Calu3 (cell line): ENCODE measurements at regions of chr14 and their contacts with region 1.

Region 1: DNA sequence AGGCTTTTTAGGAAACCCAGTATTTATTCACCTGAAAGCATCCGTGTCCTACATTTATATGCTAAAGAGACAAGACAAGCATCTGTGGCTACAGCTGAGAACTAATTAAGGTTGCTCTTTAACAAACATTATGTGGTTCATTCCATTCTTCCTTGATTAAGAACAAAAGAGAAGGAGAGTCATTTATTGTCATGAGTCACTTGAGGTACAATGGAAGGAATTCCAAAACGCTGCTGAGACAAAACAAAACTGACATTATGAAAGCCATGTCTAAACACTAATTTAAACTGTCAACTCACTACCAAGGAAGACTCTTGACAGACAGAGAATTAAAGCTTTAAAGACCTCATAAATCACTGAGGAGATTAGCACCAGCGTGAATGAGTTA is 214.4 kb downstream of the BMP4 start:
- DNase-seq: no peak
- H3K4me3 Mint-ChIP-seq: no peak overlapping the region
- H3K27ac Mint-ChIP-seq: no peak overlapping the region
- H3K4me1 Mint-ChIP-seq: no peaks in the 10 kb centered on the region
- H3K27me3 Mint-ChIP-seq: no peaks in the 10 kb centered on the region
- CTCF ChIP-seq: no peak

Region 2: GRCh38 chr14:52844262-52845060 is 897.8 kb before region 1 on chr14:
- CTCF ChIA-PET with region 1: interaction called, 10 read pairs
- intact Hi-C with region 1: no loop called
- DNase-seq: no peak
- H3K4me3 Mint-ChIP-seq: no peak overlapping the region
- H3K27ac Mint-ChIP-seq: no peak overlapping the region
- H3K4me1 Mint-ChIP-seq: no peaks in the 10 kb centered on the region
- H3K27me3 Mint-ChIP-seq: no peaks in the 10 kb centered on the region
- CTCF ChIP-seq: no peak

Region 3: GRCh38 chr14:53411125-53411524 is 331.1 kb before region 1 on chr14:
- CTCF ChIA-PET with region 1: no interaction called
- intact Hi-C with region 1: no loop called
- DNase-seq: no peak
- H3K4me3 Mint-ChIP-seq: no peak overlapping the region
- H3K27ac Mint-ChIP-seq: no peak overlapping the region
- H3K4me1 Mint-ChIP-seq: no peaks in the 10 kb centered on the region
- H3K27me3 Mint-ChIP-seq: no peaks in the 10 kb centered on the region
- CTCF ChIP-seq: no peak

Region 4: DNA sequence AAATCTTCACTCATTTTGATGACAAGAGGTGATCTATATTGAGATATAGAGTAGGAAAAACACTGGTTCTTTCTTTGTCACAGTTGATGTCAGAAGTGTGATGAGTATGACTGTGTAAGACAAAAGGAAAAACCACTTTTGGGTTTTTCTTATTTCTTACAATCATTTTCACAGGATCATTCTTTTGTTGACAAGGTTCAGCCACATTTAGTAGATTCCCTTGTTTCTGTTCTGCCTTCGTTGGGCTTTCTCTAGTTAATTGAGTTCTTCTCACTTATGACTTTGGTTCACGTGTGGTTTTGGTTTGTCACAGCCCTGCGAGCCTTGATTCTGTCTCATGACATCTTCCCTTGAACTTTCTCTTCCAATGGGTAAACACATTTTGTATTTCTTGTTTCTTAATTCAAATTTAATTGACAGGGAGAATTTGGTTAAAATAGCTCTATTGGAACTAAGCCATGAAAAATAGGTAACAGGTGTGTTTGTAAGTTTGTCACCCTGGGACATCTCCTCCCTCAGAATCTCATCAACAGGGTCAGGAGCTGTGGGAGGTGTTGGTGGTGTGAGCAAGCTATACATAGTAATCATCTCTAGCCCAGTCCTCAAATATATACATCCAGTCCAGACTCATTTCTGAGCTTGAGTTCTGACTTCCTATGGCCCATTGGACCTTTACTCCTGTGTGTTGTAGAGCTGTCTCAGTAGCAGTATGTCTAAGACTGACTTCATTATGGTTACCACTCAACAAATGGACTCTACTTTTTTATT is 40.9 kb before region 1 on chr14:
- CTCF ChIA-PET with region 1: interaction called, 10 read pairs
- intact Hi-C with region 1: no loop called
- DNase-seq: no peak
- H3K4me3 Mint-ChIP-seq: no peak overlapping the region
- H3K27ac Mint-ChIP-seq: no peak overlapping the region
- H3K4me1 Mint-ChIP-seq: peaks cover 9% of the 10 kb centered on the region
- H3K27me3 Mint-ChIP-seq: no peaks in the 10 kb centered on the region
- CTCF ChIP-seq: no peak